Transverse colon (tissue), 4 donors: ENCODE measurements at regions of chr2 and their contacts with region 1.

Region 1: DNA sequence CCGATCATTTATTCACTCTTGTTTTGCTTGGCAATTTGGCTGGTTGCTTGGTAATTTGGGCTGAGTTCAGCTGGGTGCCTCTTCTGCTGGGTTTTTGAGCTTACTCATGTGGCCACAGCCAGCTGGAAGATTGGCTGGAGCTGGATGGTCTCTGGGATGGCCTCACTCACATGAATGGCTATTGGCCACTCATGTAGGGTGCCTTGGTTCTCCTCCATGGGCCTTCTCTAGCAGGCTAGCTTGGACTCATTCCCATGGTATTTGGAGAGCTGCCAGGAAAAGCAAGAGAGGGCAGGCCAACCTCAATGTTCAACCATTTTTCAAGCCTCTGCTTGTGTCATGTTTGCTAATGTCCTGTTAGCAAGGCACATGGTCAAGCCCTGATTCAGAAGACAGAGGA is 16.9 kb downstream of the ZAP70 start:
- DNase-seq: no peak
- H3K4me3 ChIP-seq: no peak overlapping the region
- H3K27ac ChIP-seq: no peak overlapping the region
- H3K4me1 ChIP-seq: no peaks in the 10 kb centered on the region
- H3K27me3 ChIP-seq: no peaks in the 10 kb centered on the region
- CTCF ChIP-seq: no peak
- EP300 ChIP-seq: no peak
- POLR2A ChIP-seq: no peak

Region 2: DNA sequence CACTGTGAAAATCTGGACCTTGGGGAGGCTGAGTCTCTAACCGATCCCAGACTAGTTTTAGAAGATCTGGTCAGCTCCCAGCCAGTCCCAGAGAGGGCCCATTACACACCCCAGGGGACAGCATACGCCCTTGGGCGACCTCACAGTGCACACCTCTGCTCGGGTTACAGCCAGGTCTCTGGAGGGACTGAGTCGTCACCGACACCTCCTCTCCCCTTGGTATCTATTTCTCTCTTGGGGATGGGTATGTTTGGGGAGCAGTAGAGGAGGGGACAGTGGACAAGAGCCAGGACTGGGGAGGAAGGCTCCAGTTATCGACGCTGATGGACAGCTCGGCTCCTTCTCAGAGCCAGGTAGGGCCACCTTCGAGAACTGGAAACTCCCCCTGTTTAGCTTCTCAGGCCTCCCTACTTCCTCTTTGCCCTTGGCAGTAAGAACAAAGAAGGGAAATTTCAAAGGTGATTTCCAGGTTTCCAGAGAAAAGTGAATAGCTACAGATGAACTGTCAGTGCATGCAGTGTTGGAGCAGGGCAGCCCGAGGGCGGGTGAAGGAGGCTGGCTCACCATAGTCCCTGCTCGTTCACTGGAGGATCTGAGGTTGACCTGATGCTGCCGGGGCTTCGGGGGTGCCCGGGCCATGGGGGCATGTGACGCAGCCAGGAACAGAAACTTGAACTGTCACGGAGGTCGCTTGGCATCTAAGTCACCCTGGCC is 856.0 kb before region 1 on chr2:
- in situ Hi-C with region 1: no loop called
- intact Hi-C with region 1: no loop called
- DNase-seq: no peak
- H3K4me3 ChIP-seq: no peak overlapping the region
- H3K27ac ChIP-seq: peak overlapping the region in 2 of 4 donors; percentile 6 to 54
- H3K4me1 ChIP-seq: peaks cover 10 to 22% (median 13%) of the 10 kb centered on the region in 4 donors
- H3K27me3 ChIP-seq: no peaks in the 10 kb centered on the region
- CTCF ChIP-seq: no peak
- EP300 ChIP-seq: no peak
- POLR2A ChIP-seq: no peak

Region 3: GRCh38 chr2:97914691-97915213 is 184.5 kb after region 1 on chr2:
- in situ Hi-C with region 1: no loop called
- intact Hi-C with region 1: no loop called
- DNase-seq: no peak
- H3K4me3 ChIP-seq: no peak overlapping the region
- H3K27ac ChIP-seq: no peak overlapping the region
- H3K4me1 ChIP-seq: peaks cover 0 to 24% (median 14%) of the 10 kb centered on the region in 4 donors
- H3K27me3 ChIP-seq: no peaks in the 10 kb centered on the region
- CTCF ChIP-seq: no peak
- EP300 ChIP-seq: no peak
- POLR2A ChIP-seq: no peak

Region 4: DNA sequence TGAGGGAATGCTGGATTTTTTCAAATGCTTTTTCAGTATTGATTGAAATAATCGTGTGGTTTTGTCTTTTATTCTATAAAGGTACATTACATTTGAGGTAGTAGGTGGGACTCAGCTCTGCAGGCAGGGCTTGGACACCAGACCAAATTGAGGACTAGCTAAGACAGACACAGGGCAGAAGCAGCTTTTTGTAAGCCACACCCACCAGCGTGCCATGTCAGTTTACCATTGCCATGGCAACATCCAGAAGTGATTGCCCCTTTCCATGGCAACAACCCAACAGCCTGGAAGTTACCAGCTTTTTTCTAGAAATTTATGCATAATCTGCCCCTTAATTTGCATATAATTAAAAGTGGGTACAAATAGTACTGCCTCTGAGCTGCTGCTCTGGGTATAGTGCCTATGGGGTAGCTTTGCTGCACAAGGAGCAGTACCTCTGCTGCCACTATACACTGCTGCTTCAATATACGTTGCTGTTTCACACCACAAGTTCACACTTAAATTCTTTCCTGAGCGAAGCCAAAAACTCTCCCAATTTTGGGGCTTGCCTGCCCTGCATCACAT is 333.1 kb after region 1 on chr2:
- in situ Hi-C with region 1: no loop called
- intact Hi-C with region 1: no loop called
- DNase-seq: no peak
- H3K4me3 ChIP-seq: no peak overlapping the region
- H3K27ac ChIP-seq: no peak overlapping the region
- H3K4me1 ChIP-seq: no peaks in the 10 kb centered on the region
- H3K27me3 ChIP-seq: no peaks in the 10 kb centered on the region
- CTCF ChIP-seq: no peak
- EP300 ChIP-seq: no peak
- POLR2A ChIP-seq: no peak

Region 5: DNA sequence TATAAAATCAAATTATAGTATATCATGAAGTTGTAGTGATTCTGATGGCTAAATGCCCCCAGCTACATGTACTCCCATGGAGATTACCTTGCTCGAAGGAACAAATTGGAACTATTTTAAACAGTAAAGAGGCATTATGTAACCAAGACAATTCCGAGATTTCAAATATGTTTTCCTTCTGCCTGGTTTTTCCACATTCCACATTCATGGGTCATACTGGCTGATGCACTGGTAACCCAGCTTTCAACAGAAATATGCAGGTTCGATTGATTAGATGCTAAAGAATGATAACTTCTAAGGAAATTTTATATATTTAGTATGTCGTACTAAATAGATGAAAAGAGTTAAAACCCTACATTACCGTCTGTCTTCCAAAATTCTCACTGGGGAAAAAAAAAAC is 1063.1 kb after region 1 on chr2:
- in situ Hi-C with region 1: no loop called
- intact Hi-C with region 1: loop called (anchors 5 kb)
- DNase-seq: no peak
- H3K4me3 ChIP-seq: no peak overlapping the region
- H3K27ac ChIP-seq: no peak overlapping the region
- H3K4me1 ChIP-seq: no peaks in the 10 kb centered on the region
- H3K27me3 ChIP-seq: no peaks in the 10 kb centered on the region
- CTCF ChIP-seq: no peak
- EP300 ChIP-seq: no peak
- POLR2A ChIP-seq: no peak